Psoas muscle (tissue), 8 donors: ENCODE measurements at regions of chr13 and their contacts with region 1.

Region 1: GRCh38 chr13:99269627-99270241 is 11.6 kb upstream of the GPR18 start:
- DNase-seq: no peak
- ATAC-seq: peak; percentile 60 to 84 (median 73)
- H3K4me3 ChIP-seq: no peak overlapping the region
- H3K27ac ChIP-seq: no peak overlapping the region
- H3K4me1 ChIP-seq: peaks cover 11% of the 10 kb centered on the region
- H3K27me3 ChIP-seq: no peaks in the 10 kb centered on the region
- CTCF ChIP-seq: peak; percentile 66

Region 2: DNA sequence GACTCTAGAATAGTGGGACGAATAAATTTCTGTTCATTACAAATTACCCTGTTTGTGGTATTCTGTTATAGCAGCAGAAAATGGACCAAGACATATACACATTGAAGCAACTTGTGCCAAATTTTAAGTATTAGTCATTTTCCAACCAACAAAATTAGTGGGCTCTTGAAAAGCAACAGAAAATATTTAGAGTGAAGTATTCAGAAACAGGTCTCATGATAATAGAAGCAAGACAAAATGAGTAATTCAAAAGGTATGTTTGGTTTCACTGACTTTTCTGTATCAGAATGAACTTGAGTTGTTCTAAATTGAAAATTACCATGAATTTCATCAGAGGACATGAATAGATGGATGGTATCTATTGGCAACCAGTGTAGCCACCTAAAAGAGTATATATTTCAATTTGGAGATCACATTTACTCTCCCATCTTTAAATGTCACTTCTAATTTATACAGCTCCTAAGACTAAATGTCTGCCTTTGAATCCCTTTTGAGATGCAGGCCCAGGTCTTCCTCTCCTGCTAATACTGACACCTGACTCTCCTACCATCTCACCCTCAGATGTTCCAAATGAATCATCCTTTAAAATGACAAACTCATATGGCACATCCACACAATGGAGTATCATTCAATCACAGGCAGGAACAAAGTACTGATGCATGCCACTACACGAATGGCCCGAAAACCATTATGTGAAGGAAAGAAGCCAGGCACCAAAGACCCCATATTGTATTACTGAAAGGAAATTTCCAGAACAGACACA is 251.1 kb before region 1 on chr13:
- intact Hi-C with region 1: no loop called
- DNase-seq: no peak
- ATAC-seq: no peak
- H3K4me3 ChIP-seq: no peak overlapping the region
- H3K27ac ChIP-seq: no peak overlapping the region
- H3K4me1 ChIP-seq: no peaks in the 10 kb centered on the region
- H3K27me3 ChIP-seq: no peaks in the 10 kb centered on the region
- CTCF ChIP-seq: no peak

Region 3: GRCh38 chr13:99178636-99179035 is 91.1 kb before region 1 on chr13:
- intact Hi-C with region 1: loop called (anchors 2 kb)
- DNase-seq: peak in 1 of 2 donors; percentile 74
- ATAC-seq: no peak
- H3K4me3 ChIP-seq: no peak overlapping the region
- H3K27ac ChIP-seq: no peak overlapping the region
- H3K4me1 ChIP-seq: no peaks in the 10 kb centered on the region
- H3K27me3 ChIP-seq: peaks cover 0 to 3% (median 0%) of the 10 kb centered on the region in 3 donors
- CTCF ChIP-seq: no peak

Region 4: GRCh38 chr13:99191879-99192399 is 77.8 kb before region 1 on chr13:
- intact Hi-C with region 1: loop called in 1 of 2 experiments (anchors 5 kb)
- DNase-seq: no peak
- ATAC-seq: peak in 1 of 4 donors; percentile 16
- H3K4me3 ChIP-seq: no peak overlapping the region
- H3K27ac ChIP-seq: no peak overlapping the region
- H3K4me1 ChIP-seq: no peaks in the 10 kb centered on the region
- H3K27me3 ChIP-seq: no peaks in the 10 kb centered on the region
- CTCF ChIP-seq: no peak

Region 5: GRCh38 chr13:99218969-99219368 is 50.8 kb before region 1 on chr13:
- intact Hi-C with region 1: loop called in 1 of 2 experiments (anchors 5 kb)
- DNase-seq: no peak
- ATAC-seq: no peak
- H3K4me3 ChIP-seq: peak overlapping the region; percentile 29
- H3K27ac ChIP-seq: peak overlapping the region; percentile 77
- H3K4me1 ChIP-seq: peaks cover 75% of the 10 kb centered on the region
- H3K27me3 ChIP-seq: no peaks in the 10 kb centered on the region
- CTCF ChIP-seq: no peak

Region 6: DNA sequence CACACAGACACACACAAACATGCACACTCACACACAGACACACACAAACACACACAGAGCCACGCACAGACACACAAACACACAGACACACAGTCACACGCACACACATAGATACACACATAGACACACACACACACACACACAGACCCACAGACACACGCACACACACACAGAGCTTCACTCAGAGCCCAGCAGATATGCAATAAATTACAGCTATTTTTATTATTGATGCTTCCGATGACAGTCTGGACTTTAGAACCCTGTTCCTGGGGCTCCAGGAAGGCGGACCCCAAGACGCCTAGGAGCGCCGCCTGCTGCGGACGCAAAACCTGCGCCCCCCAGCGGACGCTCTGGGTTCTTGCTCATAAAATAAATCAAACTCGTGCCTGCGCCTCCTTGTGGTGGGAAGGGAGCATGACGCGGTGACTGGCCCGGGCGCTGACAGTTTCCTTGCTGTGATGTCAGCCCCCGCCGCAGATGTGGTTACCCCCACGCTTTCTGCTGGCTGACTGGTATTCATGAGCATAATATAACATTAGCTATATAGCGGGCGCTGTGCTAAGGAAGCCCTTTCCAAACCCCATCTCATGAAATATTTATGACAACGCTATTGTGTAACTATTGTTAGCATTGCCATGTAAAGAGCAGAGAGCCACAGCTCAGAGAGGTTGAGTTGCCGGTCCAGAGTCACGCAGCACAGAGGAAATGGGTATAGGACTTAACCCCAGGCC is 167.1 kb after region 1 on chr13:
- intact Hi-C with region 1: loop called (anchors 1 to 2 kb)
- DNase-seq: peak; percentile 82 to 90
- ATAC-seq: peak; percentile 77 to 90 (median 84)
- H3K4me3 ChIP-seq: peak overlapping the region; percentile 10
- H3K27ac ChIP-seq: no peak overlapping the region
- H3K4me1 ChIP-seq: no peaks in the 10 kb centered on the region
- H3K27me3 ChIP-seq: peaks cover 0 to 3% (median 0%) of the 10 kb centered on the region in 3 donors
- CTCF ChIP-seq: peak; percentile 99